HCT116 (cell line): ENCODE measurements at regions of chr17 and their contacts with region 1.

Region 1: GRCh38 chr17:40417609-40418427 is at the start of gene TOP2A:
- DNase-seq: peak; percentile 100
- ATAC-seq: peak; percentile 95
- H3K4me3 ChIP-seq: peak within 1 kb of the TSS; percentile 81 to 94
- H3K27ac ChIP-seq: peak within 1 kb of the TSS; percentile 91
- H3K4me1 ChIP-seq: peaks cover 13 to 28% of the 10 kb centered on the region in 2 experiments; a peak in 3 of 4 replicates
- H3K27me3 ChIP-seq: no peaks in the 10 kb centered on the region
- CTCF ChIP-seq: no peak
- POLR2A ChIP-seq: peak; percentile 68
- RAD21 ChIP-seq: no peak
- total RNA-seq, gene TOP2A: 141 TPM

Region 2: DNA sequence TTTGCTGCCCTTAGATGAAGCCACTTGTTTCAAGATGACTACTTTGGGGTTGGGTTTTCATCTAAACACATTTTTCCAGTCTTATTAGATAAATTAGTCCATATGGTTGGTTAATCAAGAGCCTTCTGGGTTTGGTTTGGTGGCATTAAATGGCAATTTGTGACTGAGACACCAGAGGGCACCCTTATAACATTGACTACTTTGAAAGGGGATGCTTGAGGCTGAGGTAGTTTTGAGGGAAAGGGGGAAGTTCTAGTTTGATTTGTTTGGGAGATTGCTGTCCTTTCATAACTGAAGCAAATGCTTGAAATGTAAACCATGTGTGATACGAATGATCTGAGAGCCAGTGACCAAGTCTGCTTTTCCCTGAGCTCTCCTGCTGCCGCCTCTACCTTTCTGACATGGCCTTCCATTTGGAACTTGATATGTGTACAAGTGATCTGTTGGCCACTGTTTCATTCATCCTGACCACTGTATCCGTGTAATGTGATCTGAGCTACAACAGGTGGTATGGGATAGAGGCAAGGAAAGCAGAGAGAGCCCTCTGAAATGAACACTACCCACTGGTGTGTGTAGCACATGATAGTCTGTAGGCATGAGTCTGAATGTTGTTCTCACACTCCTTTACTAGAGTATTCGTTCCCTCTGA is 114.7 kb before region 1 on chr17:
- CTCF ChIA-PET with region 1: no interaction called
- POLR2A ChIA-PET with region 1: no interaction called
- RAD21 ChIA-PET with region 1: no interaction called
- intact Hi-C with region 1: loop called (anchors 5 kb)
- DNase-seq: peak; percentile 35
- ATAC-seq: peak; percentile 63
- H3K4me3 ChIP-seq: no peak overlapping the region
- H3K27ac ChIP-seq: no peak overlapping the region
- H3K4me1 ChIP-seq: peaks cover 10 to 21% of the 10 kb centered on the region in 2 experiments; a peak in 3 of 4 replicates
- H3K27me3 ChIP-seq: no peaks in the 10 kb centered on the region
- CTCF ChIP-seq: peak; percentile 62 to 89 (median 70)
- POLR2A ChIP-seq: no peak
- RAD21 ChIP-seq: peak; percentile 92

Region 3: DNA sequence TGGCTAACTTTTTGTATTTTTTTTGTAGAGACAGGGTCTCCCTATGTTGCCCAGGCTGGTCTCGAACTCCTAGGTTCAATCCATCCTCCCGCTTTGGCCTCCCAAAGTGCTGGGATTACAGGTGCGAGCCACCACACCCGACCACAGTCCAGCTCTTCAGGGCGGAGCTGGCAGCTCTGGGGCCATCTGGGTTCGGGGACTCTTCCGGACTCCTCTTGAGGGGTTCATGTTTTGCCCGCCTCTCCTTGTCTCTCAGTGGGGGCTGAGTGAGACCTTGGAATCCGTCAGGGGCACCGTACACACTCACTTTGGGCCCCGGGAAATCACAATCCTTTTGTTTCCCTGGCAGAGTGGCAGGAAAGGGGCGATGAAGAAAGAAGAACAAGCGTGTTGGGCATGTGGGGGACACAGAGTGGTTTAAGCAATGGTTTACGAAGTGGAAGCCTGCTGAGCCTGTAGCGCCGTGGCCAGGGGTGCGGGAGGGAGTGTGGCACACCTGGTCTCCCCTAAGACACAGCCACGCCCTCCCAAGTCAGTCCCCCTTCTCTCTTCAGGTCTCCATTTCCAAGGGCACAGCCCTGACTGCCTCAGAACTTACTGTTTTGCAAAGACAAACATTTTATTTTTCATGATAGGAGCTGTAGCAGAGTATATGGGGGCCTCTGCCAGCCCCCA is 57.6 kb after region 1 on chr17:
- CTCF ChIA-PET with region 1: interaction called, 10 read pairs
- POLR2A ChIA-PET with region 1: no interaction called
- RAD21 ChIA-PET with region 1: interaction called, 4 to 12 read pairs
- intact Hi-C with region 1: no loop called
- DNase-seq: no peak
- ATAC-seq: no peak; the same call in 1 of the 2 replicates
- H3K4me3 ChIP-seq: no peak overlapping the region
- H3K27ac ChIP-seq: peak overlapping the region; percentile 2; the same call in 1 of the 2 replicates
- H3K4me1 ChIP-seq: peaks cover 10 to 61% of the 10 kb centered on the region in 2 experiments; a peak in 3 of 4 replicates
- H3K27me3 ChIP-seq: no peaks in the 10 kb centered on the region
- CTCF ChIP-seq: no peak
- POLR2A ChIP-seq: no peak
- RAD21 ChIP-seq: no peak

Region 4: DNA sequence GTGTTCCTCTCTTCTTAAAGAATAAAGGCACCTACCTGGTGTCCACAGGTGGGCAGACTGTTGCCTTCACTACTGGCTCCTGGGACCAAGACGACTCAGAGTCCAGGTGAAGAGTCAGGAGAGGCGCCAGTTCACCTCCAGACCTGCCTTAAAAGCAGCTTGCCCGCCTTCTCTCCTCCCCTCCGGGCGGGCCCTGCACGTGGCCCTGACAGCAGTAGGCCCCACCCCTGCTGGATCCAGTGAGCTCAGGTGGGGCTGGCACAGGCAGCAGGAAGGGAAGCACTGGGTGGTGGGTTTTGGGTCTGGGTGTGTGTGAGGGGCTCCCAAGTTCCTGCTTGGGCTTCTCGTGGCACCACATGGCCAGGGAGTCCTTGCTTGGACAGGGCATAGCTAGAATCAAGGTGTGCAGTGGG is 83.7 kb after region 1 on chr17 and contains the start of gene TNS4:
- CTCF ChIA-PET with region 1: no interaction called
- POLR2A ChIA-PET with region 1: no interaction called
- RAD21 ChIA-PET with region 1: no interaction called
- intact Hi-C with region 1: no loop called
- DNase-seq: peak; percentile 65
- ATAC-seq: peak; percentile 91
- H3K4me3 ChIP-seq: peak within 1 kb of the TSS; percentile 79 to 80
- H3K27ac ChIP-seq: peak within 1 kb of the TSS; percentile 41
- H3K4me1 ChIP-seq: peaks cover 27 to 55% of the 10 kb centered on the region in 2 experiments
- H3K27me3 ChIP-seq: no peaks in the 10 kb centered on the region
- CTCF ChIP-seq: no peak
- POLR2A ChIP-seq: peak; percentile 63
- RAD21 ChIP-seq: no peak; the same call in 1 of the 2 replicates
- total RNA-seq, gene TNS4: 36.6 TPM

Region 5: GRCh38 chr17:41082626-41083025 is 664.8 kb after region 1 on chr17:
- CTCF ChIA-PET with region 1: no interaction called
- POLR2A ChIA-PET with region 1: no interaction called
- RAD21 ChIA-PET with region 1: no interaction called
- intact Hi-C with region 1: no loop called
- DNase-seq: no peak
- ATAC-seq: no peak
- H3K4me3 ChIP-seq: peak overlapping the region in 1 of 2 experiments; percentile 14; a peak in 1 of 4 replicates
- H3K27ac ChIP-seq: peak overlapping the region; percentile 67; the same call in 1 of the 2 replicates
- H3K4me1 ChIP-seq: peaks cover 20 to 57% of the 10 kb centered on the region in 2 experiments
- H3K27me3 ChIP-seq: no peaks in the 10 kb centered on the region
- CTCF ChIP-seq: no peak
- POLR2A ChIP-seq: no peak
- RAD21 ChIP-seq: no peak